ENCODE measurements at regions of chr19 and their contacts with region 1.

Region 1: DNA sequence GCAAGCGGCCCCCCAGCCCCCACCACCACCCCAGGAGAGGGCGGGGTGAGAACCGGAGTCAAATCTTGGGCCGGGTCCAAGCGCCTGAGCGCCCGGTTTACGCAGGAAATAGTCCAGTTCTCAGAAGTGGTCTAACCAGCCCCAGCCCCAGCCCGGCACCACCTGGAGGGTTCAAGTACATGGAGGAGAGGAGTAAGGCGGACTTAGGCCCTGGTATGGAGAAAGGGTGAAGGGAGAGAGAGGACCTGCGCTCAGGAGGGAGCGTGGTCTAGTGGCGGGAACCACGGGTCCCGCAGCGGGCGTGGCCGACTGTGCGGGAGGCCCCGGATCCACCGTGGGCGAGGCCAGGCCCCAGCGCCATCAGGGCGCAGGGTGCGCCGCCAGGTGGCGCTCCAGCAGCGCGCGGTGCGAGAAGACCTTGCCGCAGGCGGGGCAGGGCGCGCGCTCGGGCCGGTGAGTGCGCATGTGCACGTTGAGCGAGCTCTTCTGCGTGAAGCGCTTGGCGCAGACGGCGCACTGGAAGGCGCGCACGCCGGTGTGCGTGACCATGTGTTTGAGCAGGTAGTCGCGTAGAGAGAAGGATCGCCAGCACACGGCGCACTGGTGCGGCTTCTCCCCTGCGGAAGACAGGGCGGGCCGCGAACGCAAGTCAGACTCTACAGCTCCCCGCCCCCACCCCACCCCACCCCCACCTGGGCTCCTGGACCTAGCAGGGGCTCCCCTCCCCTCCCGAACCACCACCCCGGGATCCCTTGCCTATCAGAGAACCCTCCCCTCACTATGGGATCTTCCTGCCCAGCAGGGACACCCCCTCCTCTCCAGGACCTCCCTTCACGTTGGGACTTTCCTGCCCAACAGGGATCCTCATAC is 2.1 kb upstream of the SLC27A5 start:
- DNase-seq: peak; percentile 97
- H3K4me3 Mint-ChIP-seq: peak overlapping the region; percentile 80
- H3K27ac Mint-ChIP-seq: peak overlapping the region; percentile 84
- H3K4me1 Mint-ChIP-seq: peaks cover 46% of the 10 kb centered on the region
- H3K27me3 Mint-ChIP-seq: no peaks in the 10 kb centered on the region

Region 2: DNA sequence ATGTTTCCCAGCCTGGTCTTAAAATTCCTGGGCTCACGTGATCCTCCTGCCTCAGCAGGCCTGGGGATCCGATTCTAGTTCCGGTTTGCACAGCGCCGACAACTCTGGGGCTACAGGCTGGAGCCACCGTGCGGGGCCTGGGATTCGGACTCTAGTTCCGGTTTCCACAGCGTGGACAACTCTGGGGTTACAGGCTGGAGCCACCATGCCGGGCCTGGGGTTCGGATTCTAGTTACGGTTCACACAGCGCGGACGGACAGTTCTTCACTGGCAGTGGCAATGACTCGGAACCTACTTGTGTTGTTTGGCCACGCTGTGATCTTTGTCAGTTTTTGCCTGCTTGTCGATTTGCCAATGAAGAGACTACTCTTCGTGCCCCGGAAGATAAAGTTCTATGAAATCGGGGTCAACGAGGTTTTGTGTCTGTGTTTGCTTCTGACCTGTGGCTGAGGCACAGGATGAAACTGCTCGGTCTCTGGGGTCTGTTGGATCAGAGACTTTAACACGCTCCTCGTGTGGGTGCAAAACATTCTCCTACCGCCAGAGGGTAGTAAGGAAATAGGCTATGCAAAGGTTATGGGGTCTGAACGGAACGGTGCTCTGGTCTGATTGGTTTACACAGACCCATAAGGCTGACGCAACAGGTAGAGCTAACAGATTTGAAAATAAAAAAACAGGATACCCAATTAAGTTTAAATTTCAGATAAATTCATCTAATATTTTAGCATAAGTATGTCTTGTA is 492.2 kb before region 1 on chr19:
- CTCF ChIA-PET with region 1: no interaction called
- POLR2A ChIA-PET with region 1: no interaction called
- DNase-seq: no peak
- H3K4me3 Mint-ChIP-seq: no peak overlapping the region
- H3K27ac Mint-ChIP-seq: no peak overlapping the region
- H3K4me1 Mint-ChIP-seq: no peaks in the 10 kb centered on the region
- H3K27me3 Mint-ChIP-seq: no peaks in the 10 kb centered on the region

Region 3: GRCh38 chr19:58492265-58492664 is 21.7 kb before region 1 on chr19:
- CTCF ChIA-PET with region 1: interaction called, 15 read pairs
- POLR2A ChIA-PET with region 1: interaction called, 19 read pairs
- DNase-seq: no peak
- H3K4me3 Mint-ChIP-seq: no peak overlapping the region
- H3K27ac Mint-ChIP-seq: no peak overlapping the region
- H3K4me1 Mint-ChIP-seq: peaks cover 35% of the 10 kb centered on the region
- H3K27me3 Mint-ChIP-seq: no peaks in the 10 kb centered on the region

Region 4: DNA sequence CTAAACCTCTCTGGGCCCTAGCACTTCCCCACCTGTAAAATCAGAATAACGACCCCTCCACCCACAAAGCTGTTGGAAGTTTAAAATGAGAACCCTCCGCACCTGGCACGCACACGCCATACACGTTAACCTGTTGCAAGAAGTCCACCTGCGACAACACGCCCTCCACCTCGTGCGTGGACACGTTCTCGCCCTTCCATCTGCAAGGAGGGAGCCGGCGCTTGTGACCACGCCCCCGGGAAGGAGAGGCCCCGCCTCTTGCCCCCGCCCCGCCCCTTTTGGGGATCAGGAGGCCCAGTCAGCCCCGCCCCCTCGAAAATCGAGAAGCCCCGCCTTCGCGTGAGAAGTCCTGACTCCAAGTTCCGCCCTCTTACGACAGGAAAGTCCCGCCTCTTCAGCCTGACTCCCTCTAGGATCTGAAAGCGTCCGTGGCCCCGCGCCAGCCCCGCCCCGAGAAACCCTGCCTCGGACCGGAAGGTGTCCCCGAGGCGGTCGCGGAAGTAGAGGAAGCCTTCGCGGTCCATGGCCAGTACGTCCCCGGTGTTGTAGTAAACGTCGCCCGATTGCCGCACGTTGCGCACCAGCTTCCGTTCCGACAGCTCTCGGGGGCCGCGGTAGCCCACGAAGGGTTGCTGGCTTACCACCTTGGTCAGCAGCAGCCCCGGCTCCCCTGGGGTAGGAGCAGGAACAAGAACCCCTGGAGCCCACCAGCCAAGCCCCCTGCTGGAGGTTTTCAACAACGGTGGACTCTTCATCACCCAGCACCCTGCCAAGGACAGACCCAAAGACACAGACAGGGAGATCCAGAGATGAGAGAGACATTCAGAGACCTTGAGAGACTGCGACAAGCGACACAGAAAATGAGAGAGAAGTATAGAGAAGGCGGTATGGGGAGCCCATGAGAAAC is 14.7 kb before region 1 on chr19:
- CTCF ChIA-PET with region 1: interaction called, 15 read pairs
- POLR2A ChIA-PET with region 1: interaction called, 13 read pairs
- DNase-seq: peak; percentile 99
- H3K4me3 Mint-ChIP-seq: peak overlapping the region; percentile 93
- H3K27ac Mint-ChIP-seq: peak overlapping the region; percentile 81
- H3K4me1 Mint-ChIP-seq: peaks cover 33% of the 10 kb centered on the region
- H3K27me3 Mint-ChIP-seq: no peaks in the 10 kb centered on the region

Region 5: GRCh38 chr19:58558623-58559274 is 44.8 kb after region 1 on chr19:
- CTCF ChIA-PET with region 1: interaction called, 39 read pairs
- POLR2A ChIA-PET with region 1: interaction called, 54 read pairs
- DNase-seq: peak; percentile 100
- H3K4me3 Mint-ChIP-seq: peak overlapping the region; percentile 98
- H3K27ac Mint-ChIP-seq: peak overlapping the region; percentile 100
- H3K4me1 Mint-ChIP-seq: peaks cover 81% of the 10 kb centered on the region
- H3K27me3 Mint-ChIP-seq: no peaks in the 10 kb centered on the region

Region 6: DNA sequence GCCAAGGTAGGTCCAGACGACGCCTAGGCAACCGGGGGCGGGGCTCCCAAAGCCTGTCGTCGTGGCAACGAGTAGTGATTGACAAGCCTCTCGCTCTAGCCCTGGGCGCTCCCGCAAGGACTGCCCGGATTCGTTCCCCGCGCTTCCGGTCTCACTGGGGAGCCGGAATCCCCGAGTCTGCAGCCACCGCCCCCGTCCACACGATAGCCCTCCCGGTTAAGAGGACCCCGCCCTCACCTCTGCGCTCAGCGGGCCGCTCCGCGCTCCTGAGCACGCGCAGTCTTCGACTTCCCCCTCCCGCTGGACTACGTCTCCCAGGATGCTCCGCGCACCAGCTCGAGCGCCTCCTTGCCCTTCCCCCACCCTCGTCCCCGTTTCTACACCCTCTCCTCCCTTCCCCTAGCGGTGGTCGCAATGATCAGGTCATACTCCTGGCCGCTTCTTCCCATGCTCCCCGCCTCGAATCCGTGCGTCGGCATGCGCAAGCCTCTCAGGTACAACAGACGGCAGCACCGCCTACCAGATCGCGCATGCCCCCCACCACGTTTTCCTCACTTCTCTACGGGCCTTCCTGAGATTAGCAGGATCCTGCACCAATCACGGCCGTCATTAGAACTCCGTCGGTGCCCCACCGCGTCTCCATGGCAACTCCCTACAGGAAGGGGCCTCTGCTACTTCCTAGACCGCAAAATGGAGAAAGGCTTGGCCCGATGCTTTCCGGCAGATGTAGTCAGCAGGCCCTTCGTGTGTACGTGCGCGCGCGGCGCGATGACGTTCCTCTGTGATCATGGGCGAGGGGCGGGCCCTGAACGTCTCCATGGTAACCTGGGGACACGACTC is 59.1 kb after region 1 on chr19 and contains the start of gene MZF1:
- CTCF ChIA-PET with region 1: interaction called, 49 read pairs
- POLR2A ChIA-PET with region 1: interaction called, 30 read pairs
- DNase-seq: peak; percentile 100
- H3K4me3 Mint-ChIP-seq: peak within 1 kb of the TSS; percentile 83
- H3K27ac Mint-ChIP-seq: peak within 1 kb of the TSS; percentile 97
- H3K4me1 Mint-ChIP-seq: peaks cover 52% of the 10 kb centered on the region
- H3K27me3 Mint-ChIP-seq: no peaks in the 10 kb centered on the region
- total RNA-seq, gene MZF1: 21.6 to 22.9 TPM

Region 7: DNA sequence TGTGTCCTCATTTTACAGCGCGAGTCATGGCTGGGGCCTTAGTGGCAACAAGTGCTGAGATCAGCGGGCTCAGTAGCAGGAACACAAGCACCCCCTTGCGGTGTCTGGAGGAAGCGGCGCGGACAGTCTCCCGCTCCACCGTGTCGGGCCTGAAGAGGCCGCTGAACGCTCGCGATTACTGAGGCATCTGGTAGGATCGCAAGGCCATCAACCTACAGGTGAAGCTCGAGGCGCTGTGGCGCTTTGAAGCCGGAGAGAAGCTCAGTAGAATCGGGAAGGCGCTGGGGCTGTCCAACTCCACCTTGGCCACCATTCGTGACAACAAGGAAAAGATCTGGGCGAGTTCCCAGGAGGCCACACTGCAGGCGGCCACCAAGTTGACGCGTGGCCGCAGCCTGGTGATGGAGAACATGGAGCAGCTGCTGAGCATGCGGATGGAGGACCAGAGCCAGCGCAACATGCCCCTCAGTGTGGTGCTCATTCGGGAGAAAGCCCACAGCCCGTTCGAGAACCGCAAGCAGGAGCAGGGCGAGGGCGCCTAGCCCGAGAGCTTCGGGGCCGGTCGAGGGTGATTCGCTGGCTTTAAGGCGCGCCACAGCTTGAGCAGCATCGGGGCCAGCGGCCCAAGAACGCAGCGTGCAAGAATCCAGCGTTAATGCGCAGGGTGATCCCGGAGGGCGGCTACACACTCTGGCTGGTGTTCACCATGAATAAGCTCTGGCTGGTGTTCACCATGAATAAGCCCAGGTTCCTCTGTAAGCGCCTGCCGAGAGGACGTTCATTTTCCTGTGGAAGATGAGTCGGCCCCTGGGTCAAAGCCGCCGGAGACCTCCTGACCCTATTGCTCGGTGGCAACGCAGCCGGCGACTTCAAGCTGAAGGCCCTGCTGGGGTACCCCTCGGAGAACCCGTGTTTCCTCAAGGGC is 67.6 kb after region 1 on chr19:
- CTCF ChIA-PET with region 1: interaction called, 49 read pairs
- POLR2A ChIA-PET with region 1: interaction called, 30 read pairs
- DNase-seq: peak; percentile 93
- H3K4me3 Mint-ChIP-seq: no peak overlapping the region
- H3K27ac Mint-ChIP-seq: peak overlapping the region; percentile 69
- H3K4me1 Mint-ChIP-seq: peaks cover 38% of the 10 kb centered on the region
- H3K27me3 Mint-ChIP-seq: no peaks in the 10 kb centered on the region

Measured in activated CD4-positive, alpha-beta memory T cell treated with anti-CD3 and anti-CD28 coated beads, Interleukin-2, amount 10 ng/mL, durations not matched to agents 7 days and 5 days (primary cell).